ENCODE measurements at regions of chr14 and their contacts with region 1.

Region 1: DNA sequence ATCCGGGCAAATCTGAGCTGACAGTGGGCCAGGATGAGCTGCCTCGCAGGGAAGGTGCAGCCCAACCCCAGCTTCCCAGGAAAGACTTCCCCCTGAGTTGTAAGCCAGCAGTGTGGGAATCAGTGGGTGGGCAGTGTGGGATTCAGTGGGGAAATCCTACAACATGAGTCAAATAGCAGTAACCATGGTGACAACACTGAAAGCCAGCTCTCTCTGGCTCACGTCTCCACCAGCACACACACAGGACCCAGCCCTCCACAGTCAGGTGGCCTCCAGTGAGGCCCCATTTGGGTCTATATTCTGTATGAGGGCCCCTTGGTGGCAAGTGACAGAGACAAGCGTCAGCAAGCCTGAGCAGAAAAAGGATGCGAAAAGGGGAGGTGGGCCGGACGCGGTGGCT is 6.0 kb upstream of the LGALS3 start:
- DNase-seq: no peak
- H3K4me3 ChIP-seq: no peak overlapping the region
- H3K4me3 Mint-ChIP-seq: no peak overlapping the region
- H3K27ac ChIP-seq: no peak overlapping the region
- H3K27ac Mint-ChIP-seq: no peak overlapping the region
- H3K4me1 ChIP-seq: peaks cover 12% of the 10 kb centered on the region
- H3K4me1 Mint-ChIP-seq: peaks cover 8 to 30% (median 10%) of the 10 kb centered on the region in 4 donors
- H3K27me3 ChIP-seq: no peaks in the 10 kb centered on the region
- H3K27me3 Mint-ChIP-seq: no peaks in the 10 kb centered on the region

Region 2: GRCh38 chr14:55102141-55102621 is 20.9 kb before region 1 on chr14:
- CTCF ChIA-PET with region 1: interaction called, 7 read pairs
- POLR2A ChIA-PET with region 1: interaction called, 27 read pairs
- intact Hi-C with region 1: no loop called
- DNase-seq: peak; percentile 53 to 77 (median 55)
- H3K4me3 ChIP-seq: peak overlapping the region in 1 of 2 donors; percentile 26
- H3K4me3 Mint-ChIP-seq: peak overlapping the region in 7 of 8 donors; percentile 18 to 85 (median 67)
- H3K27ac ChIP-seq: peak overlapping the region; percentile 65
- H3K27ac Mint-ChIP-seq: peak overlapping the region; percentile 94 to 98 (median 97)
- H3K4me1 ChIP-seq: peaks cover 72% of the 10 kb centered on the region
- H3K4me1 Mint-ChIP-seq: peaks cover 41 to 72% (median 53%) of the 10 kb centered on the region in 4 donors
- H3K27me3 ChIP-seq: no peaks in the 10 kb centered on the region
- H3K27me3 Mint-ChIP-seq: no peaks in the 10 kb centered on the region

Region 3: DNA sequence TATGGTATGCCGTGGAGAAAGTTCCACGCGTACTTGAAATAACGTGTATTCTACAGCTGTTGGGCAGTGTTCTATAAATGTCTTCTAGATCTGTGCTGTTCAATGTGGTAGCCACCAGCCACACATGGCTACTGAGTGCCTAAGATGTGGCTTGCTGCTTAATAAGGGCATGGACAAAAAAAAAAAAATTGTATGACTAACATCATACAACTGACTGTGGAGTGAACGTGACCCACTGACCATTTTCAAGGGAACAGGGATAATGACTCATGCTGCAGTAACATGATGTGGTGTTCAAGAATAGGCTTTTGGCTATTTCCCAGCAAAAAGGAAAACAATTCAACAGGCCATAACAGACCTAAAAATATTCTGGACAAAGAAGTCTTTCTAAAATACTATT is 275.6 kb after region 1 on chr14:
- CTCF ChIA-PET with region 1: no interaction called
- POLR2A ChIA-PET with region 1: no interaction called
- intact Hi-C with region 1: no loop called
- DNase-seq: no peak
- H3K4me3 ChIP-seq: no peak overlapping the region
- H3K4me3 Mint-ChIP-seq: no peak overlapping the region
- H3K27ac ChIP-seq: no peak overlapping the region
- H3K27ac Mint-ChIP-seq: no peak overlapping the region
- H3K4me1 ChIP-seq: peaks cover 8% of the 10 kb centered on the region
- H3K4me1 Mint-ChIP-seq: peaks cover 10 to 22% (median 17%) of the 10 kb centered on the region in 4 donors
- H3K27me3 ChIP-seq: no peaks in the 10 kb centered on the region
- H3K27me3 Mint-ChIP-seq: no peaks in the 10 kb centered on the region